OCI-LY7 (cell line): ENCODE measurements at regions of chr4 and their contacts with region 1.

Region 1: GRCh38 chr4:42586775-42587174 is 70.1 kb downstream of the ATP8A1 start:
- DNase-seq: no peak
- H3K4me3 ChIP-seq: no peak overlapping the region
- H3K27ac ChIP-seq: no peak overlapping the region
- H3K4me1 ChIP-seq: no peaks in the 10 kb centered on the region
- CTCF ChIP-seq: no peak

Region 2: DNA sequence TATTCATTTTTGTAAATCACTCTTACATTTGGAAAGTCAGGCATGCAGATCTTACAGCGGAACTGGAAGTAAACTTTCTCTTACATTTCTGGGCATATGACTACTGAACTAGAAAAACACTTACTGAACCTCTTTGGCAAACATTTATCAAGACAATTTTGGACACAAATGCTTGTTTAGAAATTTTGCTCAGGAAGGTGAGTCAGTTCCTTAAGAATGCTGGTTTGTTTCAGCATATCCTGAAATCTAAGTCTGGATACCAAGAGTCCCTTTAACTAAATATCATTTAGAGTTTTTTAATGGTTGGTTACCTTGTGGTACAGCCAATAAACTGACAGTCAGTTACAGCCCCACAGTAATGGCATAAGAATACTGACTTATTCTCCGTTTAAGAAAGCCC is 174.5 kb before region 1 on chr4:
- CTCF ChIA-PET with region 1: no interaction called
- POLR2A ChIA-PET with region 1: no interaction called
- intact Hi-C with region 1: no loop called
- DNase-seq: no peak
- H3K4me3 ChIP-seq: no peak overlapping the region
- H3K27ac ChIP-seq: no peak overlapping the region
- H3K4me1 ChIP-seq: no peaks in the 10 kb centered on the region
- CTCF ChIP-seq: no peak

Region 3: GRCh38 chr4:42446823-42447222 is 140.0 kb before region 1 on chr4:
- CTCF ChIA-PET with region 1: no interaction called
- POLR2A ChIA-PET with region 1: no interaction called
- intact Hi-C with region 1: no loop called
- DNase-seq: no peak
- H3K4me3 ChIP-seq: no peak overlapping the region
- H3K27ac ChIP-seq: no peak overlapping the region
- H3K4me1 ChIP-seq: no peaks in the 10 kb centered on the region
- CTCF ChIP-seq: no peak

Region 4: GRCh38 chr4:42574870-42575430 is 11.8 kb before region 1 on chr4:
- CTCF ChIA-PET with region 1: no interaction called
- POLR2A ChIA-PET with region 1: interaction called, 6 read pairs
- intact Hi-C with region 1: loop called (anchors 1 kb)
- DNase-seq: no peak
- H3K4me3 ChIP-seq: no peak overlapping the region
- H3K27ac ChIP-seq: no peak overlapping the region
- H3K4me1 ChIP-seq: no peaks in the 10 kb centered on the region
- CTCF ChIP-seq: no peak